ENCODE measurements at regions of chr11 and their contacts with region 1.

Region 1: GRCh38 chr11:64448599-64449556 is 89.9 kb downstream of the RPS6KA4 start:
- DNase-seq: peak; percentile 50 to 81 (median 74)
- ATAC-seq: peak; percentile 65
- H3K4me3 ChIP-seq: peak overlapping the region; percentile 49 to 52
- H3K4me3 Mint-ChIP-seq: peak overlapping the region; percentile 85
- H3K27ac ChIP-seq: no peak overlapping the region
- H3K27ac Mint-ChIP-seq: peak overlapping the region; percentile 62
- H3K4me1 ChIP-seq: peaks cover 13% of the 10 kb centered on the region
- H3K4me1 Mint-ChIP-seq: peaks cover 14% of the 10 kb centered on the region
- H3K27me3 ChIP-seq: no peaks in the 10 kb centered on the region
- H3K27me3 Mint-ChIP-seq: peaks cover 10% of the 10 kb centered on the region
- CTCF ChIP-seq: peak; percentile 70

Region 2: GRCh38 chr11:64436000-64436399 is 12.9 kb before region 1 on chr11:
- CTCF ChIA-PET with region 1: interaction called, 48 read pairs
- POLR2A ChIA-PET with region 1: no interaction called
- intact Hi-C with region 1: no loop called
- DNase-seq: no peak
- ATAC-seq: no peak
- H3K4me3 ChIP-seq: no peak overlapping the region
- H3K4me3 Mint-ChIP-seq: no peak overlapping the region
- H3K27ac ChIP-seq: no peak overlapping the region
- H3K27ac Mint-ChIP-seq: no peak overlapping the region
- H3K4me1 ChIP-seq: no peaks in the 10 kb centered on the region
- H3K4me1 Mint-ChIP-seq: no peaks in the 10 kb centered on the region
- H3K27me3 ChIP-seq: no peaks in the 10 kb centered on the region
- H3K27me3 Mint-ChIP-seq: peaks cover 3% of the 10 kb centered on the region
- CTCF ChIP-seq: no peak

Region 3: DNA sequence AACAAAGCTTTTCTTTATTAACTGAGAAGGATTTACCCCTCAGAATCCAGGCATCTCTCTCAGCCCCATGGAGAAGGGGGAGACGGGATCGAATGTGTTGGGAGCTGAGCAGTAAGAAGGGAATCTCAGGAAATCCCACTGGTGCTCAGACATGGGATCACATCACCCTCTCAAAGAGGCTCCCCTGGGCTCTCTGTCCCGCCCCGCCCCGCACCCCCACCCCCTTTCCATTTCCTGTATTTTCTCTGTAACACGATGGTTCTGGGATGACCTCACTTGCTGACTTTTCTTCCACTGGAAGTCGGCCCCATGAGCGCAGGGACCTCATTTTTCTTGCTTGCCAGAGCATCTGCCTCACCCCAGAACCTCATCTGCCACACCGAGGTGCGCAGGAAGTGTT is 10.1 kb after region 1 on chr11:
- CTCF ChIA-PET with region 1: interaction called, 24 read pairs
- POLR2A ChIA-PET with region 1: no interaction called
- intact Hi-C with region 1: no loop called
- DNase-seq: no peak
- ATAC-seq: no peak
- H3K4me3 ChIP-seq: no peak overlapping the region
- H3K4me3 Mint-ChIP-seq: no peak overlapping the region
- H3K27ac ChIP-seq: no peak overlapping the region
- H3K27ac Mint-ChIP-seq: no peak overlapping the region
- H3K4me1 ChIP-seq: no peaks in the 10 kb centered on the region
- H3K4me1 Mint-ChIP-seq: no peaks in the 10 kb centered on the region
- H3K27me3 ChIP-seq: no peaks in the 10 kb centered on the region
- H3K27me3 Mint-ChIP-seq: no peaks in the 10 kb centered on the region
- CTCF ChIP-seq: no peak

Region 4: GRCh38 chr11:64652586-64653387 is 203.9 kb after region 1 on chr11:
- CTCF ChIA-PET with region 1: interaction called, 6 read pairs
- POLR2A ChIA-PET with region 1: interaction called, 3 read pairs
- intact Hi-C with region 1: loop called in 1 of 2 experiments (anchors 2 kb)
- DNase-seq: peak; percentile 43 to 79 (median 71)
- ATAC-seq: peak; percentile 93
- H3K4me3 ChIP-seq: no peak overlapping the region
- H3K4me3 Mint-ChIP-seq: no peak overlapping the region
- H3K27ac ChIP-seq: no peak overlapping the region
- H3K27ac Mint-ChIP-seq: no peak overlapping the region
- H3K4me1 ChIP-seq: no peaks in the 10 kb centered on the region
- H3K4me1 Mint-ChIP-seq: no peaks in the 10 kb centered on the region
- H3K27me3 ChIP-seq: no peaks in the 10 kb centered on the region
- H3K27me3 Mint-ChIP-seq: peaks cover 9% of the 10 kb centered on the region
- CTCF ChIP-seq: peak; percentile 59

Region 5: GRCh38 chr11:64723117-64723906 is 274.4 kb after region 1 on chr11 and contains the start of gene NRXN2:
- CTCF ChIA-PET with region 1: no interaction called
- POLR2A ChIA-PET with region 1: no interaction called
- intact Hi-C with region 1: loop called in 1 of 2 experiments (anchors 2 kb)
- DNase-seq: peak; percentile 62 to 94 (median 83)
- ATAC-seq: peak; percentile 94
- H3K4me3 ChIP-seq: peak within 1 kb of the TSS; percentile 71 to 78
- H3K4me3 Mint-ChIP-seq: peak within 1 kb of the TSS; percentile 70
- H3K27ac ChIP-seq: peak within 1 kb of the TSS; percentile 49 to 71
- H3K27ac Mint-ChIP-seq: no peak within 1 kb of the TSS
- H3K4me1 ChIP-seq: peaks cover 21% of the 10 kb centered on the region
- H3K4me1 Mint-ChIP-seq: peaks cover 18% of the 10 kb centered on the region
- H3K27me3 ChIP-seq: peaks cover 0 to 7% of the 10 kb centered on the region in 2 experiments
- H3K27me3 Mint-ChIP-seq: peaks cover 9% of the 10 kb centered on the region
- CTCF ChIP-seq: peak; percentile 97
- total RNA-seq, gene NRXN2: 0.17 to 0.43 TPM